Mammary epithelial cell (primary cell): ENCODE measurements at regions of chr1 and their contacts with region 1.

Region 1: GRCh38 chr1:155001675-155002463 is 733 bp upstream of the ZBTB7B start:
- DNase-seq: peak; percentile 99
- H3K4me3 ChIP-seq: peak overlapping the region; percentile 52 to 85 (median 62)
- H3K27ac ChIP-seq: peak overlapping the region; percentile 70
- H3K4me1 ChIP-seq: peaks cover 35% of the 10 kb centered on the region
- H3K27me3 ChIP-seq: no peaks in the 10 kb centered on the region
- CTCF ChIP-seq: peak in 1 of 2 donors; percentile 60

Region 2: DNA sequence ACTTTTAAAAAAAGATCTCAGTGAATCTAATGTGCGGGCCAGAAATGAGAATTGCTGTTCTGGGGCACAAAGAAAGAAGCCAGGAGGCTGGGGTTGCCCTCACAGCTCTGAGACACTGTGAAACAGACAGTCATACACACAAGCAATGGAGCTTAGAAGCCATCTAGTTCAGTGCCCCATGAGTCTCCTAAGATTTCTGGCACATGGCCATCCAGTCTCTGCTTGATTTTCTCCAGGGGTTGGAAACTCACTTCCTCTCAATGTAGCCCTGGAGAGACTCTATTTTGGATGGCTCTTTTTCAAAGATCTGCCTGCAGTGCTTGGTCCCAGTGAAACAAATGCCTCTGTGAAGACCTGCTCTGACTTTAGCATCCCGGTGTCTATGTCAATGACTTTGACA is 170.4 kb before region 1 on chr1:
- CTCF ChIA-PET with region 1: no interaction called
- dilution Hi-C with region 1: no loop called
- in situ Hi-C with region 1: no loop called
- intact Hi-C with region 1: no loop called
- DNase-seq: no peak
- H3K4me3 ChIP-seq: no peak overlapping the region
- H3K27ac ChIP-seq: no peak overlapping the region
- H3K4me1 ChIP-seq: no peaks in the 10 kb centered on the region
- H3K27me3 ChIP-seq: peaks cover 1% of the 10 kb centered on the region
- CTCF ChIP-seq: no peak

Region 3: DNA sequence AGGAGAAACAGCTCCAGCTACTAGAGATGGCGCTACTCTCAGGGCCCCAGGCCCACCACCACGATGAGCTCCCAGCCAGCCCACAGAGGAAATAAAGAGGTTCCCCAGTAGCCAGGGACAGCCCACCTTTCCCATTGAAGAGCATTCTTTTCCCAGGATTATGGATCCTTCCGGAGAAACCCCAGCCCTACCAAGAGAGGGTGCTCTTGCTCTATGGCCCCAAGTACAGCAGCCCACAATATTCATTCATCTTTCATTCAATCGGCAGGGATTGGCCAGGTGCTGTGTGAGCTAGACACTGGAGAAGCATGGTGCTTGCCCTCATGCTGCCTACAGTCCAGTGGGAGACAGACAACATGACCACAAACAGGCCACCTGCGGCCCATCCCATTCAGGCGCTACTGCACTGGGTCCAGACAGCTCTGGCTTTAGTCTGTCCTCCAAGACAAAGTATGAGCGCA is 95.2 kb before region 1 on chr1:
- CTCF ChIA-PET with region 1: no interaction called
- dilution Hi-C with region 1: no loop called
- in situ Hi-C with region 1: no loop called
- intact Hi-C with region 1: loop called (anchors 1 kb)
- DNase-seq: peak; percentile 23
- H3K4me3 ChIP-seq: no peak overlapping the region
- H3K27ac ChIP-seq: no peak overlapping the region
- H3K4me1 ChIP-seq: no peaks in the 10 kb centered on the region
- H3K27me3 ChIP-seq: no peaks in the 10 kb centered on the region
- CTCF ChIP-seq: peak; percentile 50 to 84

Region 4: DNA sequence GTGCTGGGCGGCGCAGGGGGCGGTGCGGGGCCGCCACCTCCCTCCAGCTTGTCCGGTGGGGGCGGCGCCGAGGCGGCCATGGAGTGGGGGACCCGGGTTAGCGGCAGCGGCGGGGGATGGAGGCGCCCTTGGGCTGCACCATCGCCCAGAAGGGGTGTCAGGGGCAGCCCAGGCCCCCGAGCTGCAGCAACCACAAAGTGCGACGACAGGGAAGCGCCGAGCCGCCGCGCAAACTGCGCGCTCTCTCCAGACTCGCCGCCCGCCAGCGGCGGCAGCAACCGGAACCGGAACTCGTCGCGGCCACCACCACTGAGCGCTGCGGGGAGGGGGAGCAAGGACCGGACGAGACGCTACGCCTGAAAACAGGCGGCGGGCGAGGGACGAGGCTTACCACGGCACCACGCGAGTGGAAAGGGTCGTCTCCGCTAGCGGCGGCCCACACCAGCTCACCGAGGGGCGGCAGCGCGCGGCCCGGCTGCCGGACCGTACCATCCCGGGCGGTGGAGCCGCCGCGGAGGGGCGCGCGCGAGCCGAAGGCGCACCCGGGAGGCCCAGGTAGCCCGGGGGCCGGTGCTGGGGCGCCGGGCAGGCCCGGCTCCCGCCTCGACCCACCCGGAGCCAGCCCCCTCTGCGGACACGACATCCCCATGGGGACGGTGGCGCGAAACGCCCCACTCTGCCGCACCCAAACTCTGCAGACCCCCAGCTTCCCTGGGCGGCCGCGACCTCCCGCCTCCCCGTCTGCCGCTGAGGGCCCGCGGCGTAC is 40.2 kb before region 1 on chr1 and contains the start of gene PYGO2:
- CTCF ChIA-PET with region 1: no interaction called
- dilution Hi-C with region 1: no loop called
- in situ Hi-C with region 1: no loop called
- intact Hi-C with region 1: loop called (anchors 1 kb)
- DNase-seq: peak; percentile 81
- H3K4me3 ChIP-seq: peak within 1 kb of the TSS; percentile 55 to 83 (median 71)
- H3K27ac ChIP-seq: peak within 1 kb of the TSS; percentile 49
- H3K4me1 ChIP-seq: peaks cover 24% of the 10 kb centered on the region
- H3K27me3 ChIP-seq: no peaks in the 10 kb centered on the region
- CTCF ChIP-seq: peak; percentile 23 to 32
- total RNA-seq, gene PYGO2: 12.3 to 24.4 TPM

Region 5: GRCh38 chr1:154982897-154983648 is 18.8 kb before region 1 on chr1 and contains the start of gene FLAD1:
- CTCF ChIA-PET with region 1: interaction called, 11 read pairs
- dilution Hi-C with region 1: no loop called
- in situ Hi-C with region 1: no loop called
- intact Hi-C with region 1: loop called (anchors 1 kb)
- DNase-seq: peak; percentile 100
- H3K4me3 ChIP-seq: peak within 1 kb of the TSS; percentile 64 to 84 (median 72)
- H3K27ac ChIP-seq: peak within 1 kb of the TSS; percentile 67
- H3K4me1 ChIP-seq: peaks cover 12% of the 10 kb centered on the region
- H3K27me3 ChIP-seq: no peaks in the 10 kb centered on the region
- CTCF ChIP-seq: no peak
- total RNA-seq, gene FLAD1: 46.4 to 58.5 TPM

Region 6: GRCh38 chr1:155017041-155017945 is 15.4 kb after region 1 on chr1:
- CTCF ChIA-PET with region 1: no interaction called
- dilution Hi-C with region 1: no loop called
- in situ Hi-C with region 1: no loop called
- intact Hi-C with region 1: loop called (anchors 1 kb)
- DNase-seq: peak; percentile 99
- H3K4me3 ChIP-seq: peak overlapping the region in 2 of 3 experiments; percentile 12 to 31
- H3K27ac ChIP-seq: peak overlapping the region; percentile 50
- H3K4me1 ChIP-seq: peaks cover 23% of the 10 kb centered on the region
- H3K27me3 ChIP-seq: no peaks in the 10 kb centered on the region
- CTCF ChIP-seq: peak; percentile 97 to 100

Region 7: DNA sequence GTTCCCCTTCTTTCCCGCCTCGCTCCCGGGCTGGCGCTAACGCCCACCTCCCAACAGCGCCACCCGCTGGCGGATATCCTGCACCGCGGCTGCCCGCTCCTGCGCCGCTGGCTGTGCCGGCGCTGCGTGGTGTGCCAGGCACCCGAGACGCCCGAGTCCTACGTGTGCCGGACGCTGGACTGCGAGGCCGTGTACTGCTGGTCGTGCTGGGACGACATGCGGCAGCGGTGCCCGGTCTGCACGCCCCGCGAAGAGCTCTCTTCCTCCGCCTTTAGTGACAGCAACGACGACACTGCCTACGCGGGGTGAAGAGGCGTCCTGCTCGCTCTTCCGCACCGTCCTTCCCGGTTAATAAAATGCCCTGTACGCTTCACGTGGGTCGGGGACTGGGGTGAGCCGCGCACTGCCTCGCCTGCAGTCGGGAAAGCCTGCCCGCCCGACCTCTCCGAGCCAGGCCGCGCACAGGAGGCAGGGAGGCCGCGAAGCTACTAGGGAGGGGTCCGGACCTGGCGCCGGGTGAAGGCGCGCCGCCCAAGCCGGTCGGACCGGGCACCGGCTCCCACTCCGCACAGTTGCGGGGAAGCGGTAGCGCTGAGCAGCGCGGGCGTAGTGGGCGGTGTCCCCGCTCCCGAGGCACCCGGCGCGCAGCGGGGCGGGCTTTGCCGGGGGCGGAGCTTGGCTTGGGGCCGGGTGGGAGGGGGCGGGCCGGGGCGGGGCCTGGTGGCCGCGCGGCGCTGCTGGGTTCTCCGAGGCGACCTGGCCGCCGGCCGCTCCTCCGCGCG is 48.9 kb after region 1 on chr1 and contains the start of gene ADAM15:
- CTCF ChIA-PET with region 1: no interaction called
- dilution Hi-C with region 1: no loop called
- in situ Hi-C with region 1: no loop called
- intact Hi-C with region 1: loop called (anchors 2 kb)
- DNase-seq: peak; percentile 73
- H3K4me3 ChIP-seq: peak within 1 kb of the TSS; percentile 88 to 96 (median 90)
- H3K27ac ChIP-seq: peak within 1 kb of the TSS; percentile 63
- H3K4me1 ChIP-seq: peaks cover 31% of the 10 kb centered on the region
- H3K27me3 ChIP-seq: no peaks in the 10 kb centered on the region
- CTCF ChIP-seq: peak; percentile 72 to 95
- total RNA-seq, gene ADAM15: 111 to 127 TPM